AG04449 (cell line): ENCODE measurements at regions of chr16 and their contacts with region 1.

Region 1: DNA sequence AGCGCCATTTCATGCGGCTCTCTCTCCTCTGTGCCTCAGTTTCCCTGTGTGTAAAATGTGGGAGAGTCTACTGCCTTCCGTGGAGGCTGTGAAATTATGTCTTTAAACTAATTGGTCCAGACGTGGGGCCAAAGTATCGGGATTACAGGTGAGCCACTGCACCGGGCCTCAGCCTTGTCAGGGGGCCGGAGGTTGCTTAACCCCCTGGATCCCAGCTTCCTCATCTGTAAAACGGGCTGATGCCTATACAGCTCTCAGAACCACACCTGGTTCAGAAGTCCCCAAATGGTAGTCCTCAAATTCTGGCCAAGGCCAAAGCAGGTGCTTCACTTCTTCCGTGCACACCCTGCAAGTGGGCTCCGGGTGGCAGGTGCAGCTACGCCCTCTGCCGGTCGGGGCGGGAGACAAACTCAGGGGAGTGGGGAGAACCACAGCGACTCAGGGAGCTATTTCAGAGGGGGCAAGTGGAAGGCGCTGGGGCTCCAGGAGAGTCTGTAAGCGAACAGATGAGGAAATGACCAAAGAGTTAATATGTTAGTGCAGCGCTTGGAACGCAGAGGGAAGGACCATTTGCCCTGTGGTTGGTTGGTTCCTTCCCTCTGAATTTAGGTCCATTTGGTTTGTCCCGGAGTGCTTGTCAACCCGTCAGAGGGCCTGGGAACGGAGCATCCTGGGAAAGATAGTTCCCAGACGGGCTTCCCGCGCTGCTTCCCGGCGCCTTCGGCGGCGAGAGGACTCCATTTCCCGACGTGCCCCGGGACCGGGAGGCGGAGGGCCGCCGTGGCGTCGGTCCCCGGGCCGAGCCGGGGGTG is at the start of gene MGRN1:
- DNase-seq: peak; percentile 90
- H3K4me3 ChIP-seq: peak within 1 kb of the TSS; percentile 88
- CTCF ChIP-seq: peak; percentile 94

Region 2: DNA sequence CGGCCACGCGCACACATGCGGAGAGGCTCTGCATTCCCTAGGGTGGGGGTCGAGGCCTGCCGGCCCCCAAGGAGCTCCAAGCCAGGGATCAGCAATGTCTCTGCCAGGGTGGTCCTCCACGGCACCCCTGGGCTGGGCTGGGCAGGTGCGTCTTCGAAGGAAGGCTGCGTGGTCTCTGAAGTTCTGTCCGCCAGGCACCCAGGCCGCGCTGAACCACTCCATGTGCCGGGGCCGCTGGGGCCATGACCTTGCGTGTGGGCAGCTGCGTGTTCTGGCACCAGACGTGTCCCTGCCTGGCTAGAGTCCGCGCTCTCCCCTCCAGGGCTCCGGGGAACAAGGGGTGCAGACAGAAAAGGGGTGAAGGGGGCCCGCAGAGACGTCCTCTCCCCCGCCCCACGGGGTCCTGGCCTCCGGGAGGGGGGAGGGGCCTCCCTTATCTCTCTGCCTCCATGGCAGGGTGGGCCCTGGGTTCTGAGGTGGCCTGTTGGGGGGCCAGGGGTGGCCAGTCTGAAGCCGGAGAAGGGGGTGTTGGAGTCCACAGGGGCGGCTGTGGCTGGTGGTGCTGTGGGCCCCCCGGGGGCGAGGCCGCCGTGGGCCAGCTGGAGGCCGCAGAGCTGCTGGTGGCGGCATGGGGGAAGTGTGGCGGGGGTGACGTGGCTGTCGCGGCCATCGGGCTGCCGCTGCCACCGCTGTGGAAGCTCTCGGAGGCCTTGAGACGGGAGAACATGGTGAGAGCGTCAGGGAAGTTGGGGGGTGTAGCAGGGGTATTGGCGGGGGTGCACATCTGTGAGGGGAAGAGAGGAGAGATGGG is 14.8 kb before region 1 on chr16:
- CTCF ChIA-PET with region 1: interaction called, 14 read pairs
- POLR2A ChIA-PET with region 1: no interaction called
- DNase-seq: no peak
- H3K4me3 ChIP-seq: no peak overlapping the region
- CTCF ChIP-seq: no peak

Region 3: GRCh38 chr16:4634768-4635167 is 10.5 kb after region 1 on chr16:
- CTCF ChIA-PET with region 1: interaction called, 40 read pairs
- POLR2A ChIA-PET with region 1: interaction called, 4 read pairs
- DNase-seq: no peak
- H3K4me3 ChIP-seq: no peak overlapping the region
- CTCF ChIP-seq: no peak

Region 4: GRCh38 chr16:4640572-4641305 is 16.5 kb after region 1 on chr16:
- CTCF ChIA-PET with region 1: interaction called, 40 read pairs
- POLR2A ChIA-PET with region 1: interaction called, 4 read pairs
- DNase-seq: no peak
- H3K4me3 ChIP-seq: no peak overlapping the region
- CTCF ChIP-seq: no peak

Region 5: DNA sequence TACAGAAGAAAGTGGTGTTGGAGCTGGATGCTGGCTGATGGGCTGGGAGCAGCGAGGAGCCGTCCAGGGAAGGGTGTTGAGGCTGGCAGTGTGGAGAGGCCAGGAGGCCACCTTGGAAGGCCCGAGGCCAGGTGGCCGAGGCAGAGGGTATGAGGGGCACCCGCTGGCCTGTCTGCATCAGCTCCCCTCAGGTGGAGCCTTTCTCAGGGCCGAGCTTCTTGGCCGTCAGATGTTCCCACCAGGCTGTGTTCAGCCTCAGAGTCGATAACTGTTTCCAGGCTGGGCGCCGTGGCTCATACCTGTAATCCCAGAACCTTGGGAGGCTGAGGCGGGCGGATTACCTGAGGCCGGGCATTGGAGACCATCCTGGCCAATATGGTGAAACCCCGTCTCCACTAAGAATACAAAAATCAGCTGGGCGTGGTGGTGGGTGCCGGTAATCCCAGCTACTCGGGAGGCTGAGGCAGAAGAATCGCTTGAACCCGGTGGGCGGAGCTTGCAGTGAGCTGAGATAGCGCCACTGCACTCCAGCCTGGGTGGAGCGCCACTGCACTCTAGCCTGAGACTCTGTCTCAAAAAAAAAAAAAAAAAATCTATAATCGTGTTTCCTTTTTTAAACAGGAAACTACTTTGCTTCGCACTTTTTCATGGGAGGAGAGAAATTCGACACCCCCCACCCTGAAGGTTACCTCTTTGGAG is 25.7 kb after region 1 on chr16:
- CTCF ChIA-PET with region 1: interaction called, 14 read pairs
- POLR2A ChIA-PET with region 1: no interaction called
- DNase-seq: no peak
- H3K4me3 ChIP-seq: no peak overlapping the region
- CTCF ChIP-seq: no peak

Region 6: GRCh38 chr16:4682616-4683254 is 58.5 kb after region 1 on chr16:
- CTCF ChIA-PET with region 1: no interaction called
- POLR2A ChIA-PET with region 1: no interaction called
- DNase-seq: no peak
- H3K4me3 ChIP-seq: no peak overlapping the region
- CTCF ChIP-seq: peak; percentile 19